Heart right ventricle (tissue), 16 donors: ENCODE measurements at regions of chr12 and their contacts with region 1.

Region 1: DNA sequence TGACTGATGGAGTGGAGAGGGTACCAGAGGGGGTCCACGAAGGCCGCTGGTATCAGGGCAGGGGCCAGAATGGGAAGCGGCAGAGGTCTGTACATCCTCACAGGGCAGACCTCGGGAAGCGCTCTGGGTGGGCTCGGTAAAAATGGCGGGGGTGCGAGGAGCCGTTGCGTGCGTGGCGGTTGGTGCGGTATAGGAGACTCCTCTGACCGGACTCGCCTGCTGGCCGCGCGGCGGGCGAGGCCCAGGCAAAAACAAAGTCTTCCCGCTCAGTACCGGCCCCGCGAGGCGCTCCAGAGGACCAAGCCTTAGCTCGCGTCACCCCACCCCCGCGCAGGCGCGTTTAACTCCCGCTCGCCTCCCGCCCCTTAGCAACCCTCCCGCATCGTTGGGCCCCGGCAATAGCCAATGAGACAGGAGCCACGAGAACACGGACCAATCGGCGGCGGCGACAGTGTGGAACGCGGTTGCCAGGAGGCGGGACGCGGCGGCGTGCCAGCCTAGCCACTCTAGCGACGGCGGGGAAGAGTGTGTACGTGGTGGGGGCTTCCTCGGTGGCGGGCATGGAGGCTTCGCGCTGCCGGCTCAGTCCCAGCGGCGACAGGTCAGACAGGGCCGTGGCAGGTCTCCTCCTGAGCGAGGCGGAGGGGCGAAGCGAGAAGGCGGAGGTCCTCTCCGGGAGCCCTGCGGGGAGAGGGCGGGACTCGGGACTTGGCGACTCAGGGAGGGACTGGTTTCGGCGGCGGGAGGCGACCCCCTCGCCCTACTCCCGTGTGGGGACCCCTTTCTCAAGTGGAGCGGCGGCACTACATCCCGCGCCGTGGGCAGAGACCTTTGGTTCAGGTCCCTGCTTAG is at the start of gene TULP3:
- DNase-seq: peak; percentile 99
- ATAC-seq: peak; percentile 99
- H3K4me3 ChIP-seq: peak within 1 kb of the TSS; percentile 84 to 100 (median 95)
- H3K27ac ChIP-seq: peak within 1 kb of the TSS; percentile 83 to 96 (median 92)
- H3K4me1 ChIP-seq: peaks cover 0 to 30% (median 17%) of the 10 kb centered on the region in 9 donors
- H3K27me3 ChIP-seq: no peaks in the 10 kb centered on the region
- CTCF ChIP-seq: peak in 5 of 9 donors; percentile 6 to 39 (median 28)
- total RNA-seq, gene TULP3: 4.0 to 7.3 (median 4.6) TPM

Region 2: DNA sequence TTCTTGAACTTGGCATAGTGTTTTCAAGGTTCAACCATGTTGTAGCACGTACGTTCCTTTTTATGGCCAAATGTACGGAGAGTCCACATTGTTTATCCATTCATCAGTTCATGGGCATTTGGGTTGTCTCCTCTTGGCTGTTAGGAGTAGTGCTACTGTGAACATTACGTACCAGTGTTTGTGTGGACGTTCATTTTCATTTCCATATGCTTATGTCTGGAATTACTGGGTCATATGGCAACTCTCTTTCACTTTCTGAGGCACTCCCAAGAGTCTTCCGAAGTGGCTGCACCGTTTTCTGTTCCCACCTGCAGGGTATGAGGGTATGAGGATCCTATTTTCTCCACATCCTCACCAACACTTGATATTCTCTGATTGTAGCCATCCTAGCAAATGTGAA is 137.5 kb after region 1 on chr12:
- intact Hi-C with region 1: loop called in 4 of 10 experiments (anchors 2 to 10 kb)
- DNase-seq: no peak
- ATAC-seq: no peak
- H3K4me3 ChIP-seq: no peak overlapping the region
- H3K27ac ChIP-seq: no peak overlapping the region
- H3K4me1 ChIP-seq: peaks cover 0 to 22% (median 7%) of the 10 kb centered on the region in 9 donors
- H3K27me3 ChIP-seq: no peaks in the 10 kb centered on the region
- CTCF ChIP-seq: no peak

Region 3: DNA sequence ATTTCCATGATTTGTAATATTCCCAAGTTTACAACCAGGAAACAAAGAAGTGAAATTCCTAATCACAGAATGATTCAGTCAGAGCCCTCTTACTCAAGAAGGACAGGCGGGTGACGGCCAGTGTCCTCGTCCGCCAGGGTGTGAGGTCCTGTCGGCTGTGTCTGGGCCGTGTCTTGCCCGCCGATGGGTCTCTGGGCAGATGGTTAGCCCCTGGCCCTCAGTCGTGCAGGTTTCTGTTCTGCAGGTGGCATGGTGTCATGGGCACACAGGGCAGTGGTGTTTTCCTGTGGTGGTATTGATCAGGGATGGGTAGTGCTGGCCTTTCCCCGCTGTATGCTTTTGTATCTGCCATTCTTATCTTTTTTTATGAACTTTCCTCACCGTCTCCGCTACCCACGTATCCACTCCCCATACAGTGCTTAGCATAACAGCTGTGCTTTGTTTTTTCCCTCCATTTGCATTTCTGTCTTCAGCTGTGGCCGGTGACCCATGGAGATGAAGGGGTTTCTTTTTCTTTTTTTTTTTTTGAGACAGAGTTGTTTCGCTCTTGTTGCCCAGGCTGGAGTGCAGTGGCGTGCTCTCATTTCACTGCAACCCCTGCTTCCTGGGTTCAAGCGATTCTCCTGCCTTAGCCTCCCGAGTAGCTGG is 287.3 kb after region 1 on chr12:
- intact Hi-C with region 1: no loop called
- DNase-seq: no peak
- ATAC-seq: no peak
- H3K4me3 ChIP-seq: no peak overlapping the region
- H3K27ac ChIP-seq: no peak overlapping the region
- H3K4me1 ChIP-seq: peaks cover 9 to 50% (median 35%) of the 10 kb centered on the region in 9 donors
- H3K27me3 ChIP-seq: no peaks in the 10 kb centered on the region
- CTCF ChIP-seq: no peak

Region 4: GRCh38 chr12:4153343-4153892 is 1262.8 kb after region 1 on chr12:
- intact Hi-C with region 1: no loop called
- DNase-seq: no peak
- ATAC-seq: peak in 3 of 8 donors; percentile 37 to 38 (median 38)
- H3K4me3 ChIP-seq: no peak overlapping the region
- H3K27ac ChIP-seq: peak overlapping the region in 1 of 10 donors; percentile 68
- H3K4me1 ChIP-seq: peaks cover 0 to 31% (median 0%) of the 10 kb centered on the region in 9 donors
- H3K27me3 ChIP-seq: peaks cover 0 to 7% (median 0%) of the 10 kb centered on the region in 7 donors
- CTCF ChIP-seq: no peak